Tibial artery (tissue), 4 donors: ENCODE measurements at regions of chr14 and their contacts with region 1.

Region 1: GRCh38 chr14:33009673-33010072 is 71.0 kb downstream of the NPAS3 start:
- DNase-seq: no peak
- H3K4me3 ChIP-seq: no peak overlapping the region
- H3K27ac ChIP-seq: no peak overlapping the region
- H3K4me1 ChIP-seq: no peaks in the 10 kb centered on the region
- H3K27me3 ChIP-seq: no peaks in the 10 kb centered on the region
- CTCF ChIP-seq: no peak

Region 2: GRCh38 chr14:32576088-32576795 is 433.4 kb before region 1 on chr14:
- intact Hi-C with region 1: loop called (anchors 10 kb)
- DNase-seq: peak in 1 of 2 donors; percentile 37
- H3K4me3 ChIP-seq: peak overlapping the region; percentile 19 to 27
- H3K27ac ChIP-seq: peak overlapping the region; percentile 31 to 34
- H3K4me1 ChIP-seq: peaks cover 0 to 25% (median 6%) of the 10 kb centered on the region in 4 donors
- H3K27me3 ChIP-seq: no peaks in the 10 kb centered on the region
- CTCF ChIP-seq: peak; percentile 93 to 94

Region 3: GRCh38 chr14:33484264-33484663 is 474.6 kb after region 1 on chr14:
- intact Hi-C with region 1: no loop called
- DNase-seq: no peak
- H3K4me3 ChIP-seq: no peak overlapping the region
- H3K27ac ChIP-seq: no peak overlapping the region
- H3K4me1 ChIP-seq: no peaks in the 10 kb centered on the region
- H3K27me3 ChIP-seq: no peaks in the 10 kb centered on the region
- CTCF ChIP-seq: no peak